Psoas muscle (tissue), 8 donors: ENCODE measurements at regions of chr1 and their contacts with region 1.

Region 1: GRCh38 chr1:164914208-164914607 is 355.2 kb downstream of the PBX1 start:
- DNase-seq: no peak
- ATAC-seq: peak; percentile 78 to 89 (median 84)
- H3K4me3 ChIP-seq: no peak overlapping the region
- H3K27ac ChIP-seq: no peak overlapping the region
- H3K4me1 ChIP-seq: peaks cover 10% of the 10 kb centered on the region
- H3K27me3 ChIP-seq: no peaks in the 10 kb centered on the region
- CTCF ChIP-seq: peak; percentile 48

Region 2: DNA sequence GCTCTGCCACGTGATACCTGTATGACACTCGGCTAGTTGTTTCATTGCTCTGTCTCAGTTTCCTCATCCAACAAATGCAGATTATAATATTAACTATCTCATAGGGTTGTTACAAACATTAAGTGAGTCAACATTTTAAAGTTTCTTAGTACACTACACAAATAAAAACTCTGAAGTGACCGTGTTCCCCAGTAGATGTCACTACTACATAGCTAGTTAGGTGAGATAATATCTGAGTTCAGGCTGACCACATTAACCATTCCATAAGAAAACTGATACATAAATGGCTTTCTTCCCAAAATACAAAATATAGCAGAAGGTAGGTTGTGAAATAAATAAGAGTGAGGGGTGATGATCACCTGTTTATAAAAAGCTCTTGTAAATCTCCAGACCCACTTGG is 1378.4 kb before region 1 on chr1:
- intact Hi-C with region 1: loop called in 1 of 2 experiments (anchors 10 kb)
- DNase-seq: no peak
- ATAC-seq: peak in 1 of 4 donors; percentile 45
- H3K4me3 ChIP-seq: no peak overlapping the region
- H3K27ac ChIP-seq: no peak overlapping the region
- H3K4me1 ChIP-seq: no peaks in the 10 kb centered on the region
- H3K27me3 ChIP-seq: no peaks in the 10 kb centered on the region
- CTCF ChIP-seq: peak; percentile 21

Region 3: DNA sequence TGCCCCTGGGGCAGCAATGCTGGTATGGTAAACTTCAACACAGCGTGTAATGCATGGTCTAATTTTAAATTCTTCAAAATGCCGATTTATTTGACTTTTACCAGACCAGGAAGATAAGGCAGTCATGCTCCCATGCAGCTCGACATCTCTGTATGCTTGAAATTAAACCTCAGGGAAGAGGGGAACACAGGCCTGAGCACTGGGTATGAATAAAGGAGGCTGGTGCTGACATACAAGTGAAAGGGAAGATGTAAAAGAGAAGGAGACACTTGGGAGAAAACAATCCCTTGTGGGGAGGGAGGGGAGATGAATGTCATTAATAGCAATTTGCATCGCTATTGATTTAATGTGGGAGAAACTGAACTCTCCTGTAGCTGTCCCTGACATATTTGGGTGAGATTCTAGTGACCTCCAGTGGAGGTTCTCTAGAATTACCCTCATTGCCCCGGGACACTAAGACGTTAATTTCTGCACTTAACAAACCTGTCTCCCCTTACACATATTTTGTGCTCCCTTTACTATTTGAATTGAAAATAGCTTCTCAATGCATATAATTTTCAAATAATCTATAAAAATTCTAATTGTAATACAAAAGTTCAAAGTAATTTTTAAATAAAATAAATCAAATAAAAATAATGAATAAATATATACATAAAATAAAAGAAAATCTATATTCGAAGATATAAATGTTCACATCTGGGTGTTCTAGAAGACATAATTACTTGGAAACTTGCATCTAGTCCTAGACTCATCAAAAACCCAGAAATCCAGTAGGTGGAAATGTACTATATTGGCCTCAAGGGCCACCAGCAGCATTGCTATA is 159.2 kb after region 1 on chr1:
- intact Hi-C with region 1: no loop called
- DNase-seq: no peak
- ATAC-seq: peak; percentile 58 to 92 (median 76)
- H3K4me3 ChIP-seq: no peak overlapping the region
- H3K27ac ChIP-seq: no peak overlapping the region
- H3K4me1 ChIP-seq: no peaks in the 10 kb centered on the region
- H3K27me3 ChIP-seq: no peaks in the 10 kb centered on the region
- CTCF ChIP-seq: peak; percentile 85

Region 4: DNA sequence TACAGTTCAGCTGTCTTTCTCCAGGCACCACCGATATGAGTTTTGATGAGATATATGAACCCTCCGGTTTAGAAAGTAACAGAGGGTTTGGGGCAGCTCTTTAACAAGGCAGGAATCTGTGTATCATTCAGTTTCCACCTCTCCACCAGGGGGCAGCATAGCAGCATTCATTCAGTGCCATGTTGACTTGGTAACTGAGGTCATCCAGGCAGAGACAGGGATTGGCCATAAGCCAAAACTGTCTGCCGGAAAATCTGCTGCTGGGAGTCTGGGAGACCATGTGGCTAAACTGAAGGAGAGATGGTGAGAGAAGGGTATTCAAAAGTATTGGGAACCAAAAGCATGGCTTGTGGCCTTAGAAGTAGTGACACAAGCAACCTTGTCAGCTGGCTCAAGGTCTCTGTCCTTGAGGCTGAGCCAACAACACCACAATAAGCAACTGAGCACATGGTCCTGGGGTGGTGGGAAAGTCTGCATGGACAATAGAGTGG is 343.8 kb after region 1 on chr1:
- intact Hi-C with region 1: no loop called
- DNase-seq: peak; percentile 72 to 85
- ATAC-seq: peak; percentile 75 to 95 (median 87)
- H3K4me3 ChIP-seq: no peak overlapping the region
- H3K27ac ChIP-seq: no peak overlapping the region
- H3K4me1 ChIP-seq: peaks cover 9% of the 10 kb centered on the region
- H3K27me3 ChIP-seq: peaks cover 0 to 1% (median 0%) of the 10 kb centered on the region in 3 donors
- CTCF ChIP-seq: peak; percentile 78